Heart right ventricle (tissue), 16 donors: ENCODE measurements at regions of chr3 and their contacts with region 1.

Region 1: DNA sequence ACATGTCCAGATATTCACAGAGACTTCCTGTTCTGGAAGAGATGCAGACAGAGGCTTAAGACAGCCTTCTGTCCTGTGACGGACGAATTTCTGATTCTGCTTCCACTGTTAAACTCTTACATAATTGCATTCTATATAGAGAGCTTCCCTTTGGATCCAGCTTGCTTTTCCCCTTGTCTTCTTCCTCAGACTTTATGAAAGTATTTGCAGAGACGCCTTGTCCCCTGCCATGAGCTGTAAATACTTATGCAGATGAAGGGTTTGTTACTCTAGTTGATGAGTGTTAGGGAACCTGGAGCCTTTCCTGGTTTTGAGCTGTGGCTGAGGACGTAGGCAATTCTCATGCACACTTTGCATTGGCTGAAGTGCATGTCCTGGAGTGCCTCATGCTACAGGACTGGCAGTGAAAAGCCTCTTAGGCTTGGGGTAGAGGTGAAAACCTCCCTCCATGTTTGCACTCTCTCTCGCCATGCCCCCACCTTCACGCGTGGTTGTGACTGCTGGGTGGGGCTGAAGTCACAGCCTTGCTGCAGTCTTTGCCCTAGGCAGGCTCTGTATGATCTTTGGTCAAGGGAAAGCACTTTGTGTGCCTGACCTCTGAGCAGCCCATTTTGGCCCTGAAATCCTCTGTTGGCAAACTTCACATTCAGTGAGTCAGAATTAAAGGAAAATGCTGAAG is 286.6 kb downstream of the PTPRG start:
- DNase-seq: peak; percentile 54 to 57
- ATAC-seq: peak; percentile 66 to 94 (median 74)
- H3K4me3 ChIP-seq: peak overlapping the region in 5 of 10 donors; percentile 2 to 18 (median 5)
- H3K27ac ChIP-seq: peak overlapping the region; percentile 65 to 90 (median 83)
- H3K4me1 ChIP-seq: peaks cover 19 to 82% (median 56%) of the 10 kb centered on the region in 9 donors
- H3K27me3 ChIP-seq: no peaks in the 10 kb centered on the region
- CTCF ChIP-seq: no peak

Region 2: DNA sequence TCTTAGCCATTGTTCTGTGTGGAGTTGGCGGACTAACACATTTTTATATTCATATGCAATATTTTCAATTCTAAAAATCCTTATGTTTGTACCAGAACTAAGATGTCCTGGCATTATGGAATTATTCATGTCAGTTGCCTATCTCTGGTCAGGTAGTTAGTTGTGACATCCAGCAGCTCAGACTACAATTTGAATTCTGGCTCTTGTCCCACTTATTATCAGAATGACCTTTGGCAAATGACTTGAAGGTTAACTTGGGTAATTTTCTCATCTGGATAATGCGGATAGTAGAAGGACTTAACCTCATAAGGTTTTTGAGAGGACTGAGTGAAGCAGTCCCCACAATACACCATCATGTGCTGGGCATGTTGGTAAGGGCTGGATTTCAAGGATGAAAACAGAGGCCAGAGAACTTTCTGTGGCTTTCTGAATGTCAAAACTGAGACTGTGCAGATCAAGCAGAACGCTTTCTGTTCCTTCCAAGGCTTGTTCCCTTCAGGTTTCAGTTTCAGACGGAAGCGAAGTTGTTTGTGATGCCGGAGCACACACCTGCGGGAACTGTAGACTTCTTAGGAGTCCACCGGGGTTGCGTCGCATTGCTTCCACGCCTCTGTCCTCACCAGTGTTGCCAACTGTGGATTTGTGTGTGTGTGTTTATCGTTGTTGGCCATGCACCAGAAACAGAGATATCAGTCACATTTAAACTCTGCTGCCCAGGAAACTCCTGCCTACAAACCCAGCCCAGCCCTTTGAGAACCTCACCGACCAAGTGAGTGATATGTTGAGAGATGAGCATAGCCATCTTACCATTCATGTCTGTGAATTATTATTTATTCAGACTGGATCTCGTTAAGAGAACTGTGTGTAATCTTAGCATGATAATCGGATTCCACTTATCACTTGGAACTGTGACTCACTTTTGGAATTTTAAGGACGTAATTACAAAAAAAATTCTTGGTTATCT is 210.6 kb before region 1 on chr3:
- intact Hi-C with region 1: loop called in 1 of 10 experiments (anchors 5 kb)
- DNase-seq: peak; percentile 19 to 39
- ATAC-seq: peak; percentile 41 to 81 (median 77)
- H3K4me3 ChIP-seq: peak overlapping the region in 8 of 10 donors; percentile 5 to 46 (median 28)
- H3K27ac ChIP-seq: peak overlapping the region in 9 of 10 donors; percentile 19 to 84 (median 67)
- H3K4me1 ChIP-seq: peaks cover 3 to 70% (median 32%) of the 10 kb centered on the region in 9 donors
- H3K27me3 ChIP-seq: no peaks in the 10 kb centered on the region
- CTCF ChIP-seq: no peak

Region 3: GRCh38 chr3:61725851-61726333 is 122.0 kb before region 1 on chr3:
- intact Hi-C with region 1: loop called in 2 of 10 experiments (anchors 5 to 10 kb)
- DNase-seq: peak in 1 of 2 donors; percentile 56
- ATAC-seq: peak; percentile 48 to 91 (median 86)
- H3K4me3 ChIP-seq: no peak overlapping the region
- H3K27ac ChIP-seq: peak overlapping the region in 8 of 10 donors; percentile 10 to 68 (median 52)
- H3K4me1 ChIP-seq: peaks cover 0 to 68% (median 32%) of the 10 kb centered on the region in 9 donors
- H3K27me3 ChIP-seq: no peaks in the 10 kb centered on the region
- CTCF ChIP-seq: no peak

Region 4: DNA sequence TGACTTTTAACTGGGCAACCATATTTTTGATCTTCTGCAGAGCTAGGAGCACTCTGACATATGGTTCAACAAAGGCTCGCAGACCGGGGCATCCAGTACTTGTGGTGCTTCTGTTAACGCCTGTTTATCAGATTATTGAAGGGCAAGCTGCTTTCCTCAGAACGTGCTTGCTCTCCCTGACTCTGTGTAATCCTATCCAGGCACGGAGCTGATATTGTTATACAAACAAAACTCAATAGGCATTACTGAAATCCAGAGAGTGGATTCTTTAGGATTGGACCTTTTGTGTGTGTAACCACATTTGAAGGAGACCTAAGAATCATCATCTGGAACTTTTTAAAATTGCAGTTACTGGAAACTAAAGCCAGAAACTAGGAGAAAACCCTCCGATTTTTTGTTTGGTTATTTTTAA is 40.1 kb before region 1 on chr3:
- intact Hi-C with region 1: loop called in 4 of 10 experiments (anchors 2 to 5 kb)
- DNase-seq: peak in 1 of 2 donors; percentile 17
- ATAC-seq: peak in 6 of 8 donors; percentile 38 to 67 (median 53)
- H3K4me3 ChIP-seq: no peak overlapping the region
- H3K27ac ChIP-seq: peak overlapping the region; percentile 48 to 84 (median 74)
- H3K4me1 ChIP-seq: peaks cover 50 to 100% (median 89%) of the 10 kb centered on the region in 9 donors
- H3K27me3 ChIP-seq: no peaks in the 10 kb centered on the region
- CTCF ChIP-seq: no peak